HEK293 (cell line): ENCODE measurements at regions of chr15 and their contacts with region 1.

Region 1: DNA sequence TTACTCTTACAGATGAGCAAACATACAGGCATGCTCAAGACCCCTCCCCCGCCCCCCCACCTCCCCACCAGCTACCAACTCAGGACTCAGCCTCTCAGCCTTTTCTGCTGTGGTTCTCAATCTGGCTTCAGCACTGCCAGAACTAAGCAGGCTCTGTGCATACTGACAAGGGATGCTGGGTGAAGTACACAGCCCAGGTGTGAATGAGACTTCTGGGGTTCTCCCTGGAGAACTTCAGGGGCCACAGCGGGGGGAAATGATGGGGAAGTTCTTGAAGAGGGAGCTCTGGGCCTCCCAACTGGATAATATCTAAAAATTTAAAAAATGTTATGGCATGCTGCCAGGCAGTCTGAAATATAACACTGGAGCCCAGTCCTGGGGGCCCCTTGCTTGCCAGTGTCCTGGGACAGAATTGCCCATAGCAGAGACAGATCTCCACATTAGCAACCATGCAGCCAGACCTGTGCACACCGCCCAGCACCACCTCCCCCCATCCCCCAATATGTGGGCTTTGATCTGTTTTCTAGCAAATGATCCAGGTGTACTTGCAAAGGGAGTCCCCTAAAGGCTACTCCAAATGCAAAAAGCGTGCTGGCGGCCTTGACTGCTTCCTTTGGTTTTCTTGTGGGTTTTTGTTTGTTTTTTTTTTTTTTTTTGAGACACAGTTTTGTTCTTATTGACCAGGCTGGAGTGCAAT is 41.4 kb downstream of the PGPEP1L start:
- H3K4me3 ChIP-seq: no peak overlapping the region
- H3K27ac ChIP-seq: no peak overlapping the region
- H3K4me1 ChIP-seq: no peaks in the 10 kb centered on the region
- CTCF ChIP-seq: no peak

Region 2: DNA sequence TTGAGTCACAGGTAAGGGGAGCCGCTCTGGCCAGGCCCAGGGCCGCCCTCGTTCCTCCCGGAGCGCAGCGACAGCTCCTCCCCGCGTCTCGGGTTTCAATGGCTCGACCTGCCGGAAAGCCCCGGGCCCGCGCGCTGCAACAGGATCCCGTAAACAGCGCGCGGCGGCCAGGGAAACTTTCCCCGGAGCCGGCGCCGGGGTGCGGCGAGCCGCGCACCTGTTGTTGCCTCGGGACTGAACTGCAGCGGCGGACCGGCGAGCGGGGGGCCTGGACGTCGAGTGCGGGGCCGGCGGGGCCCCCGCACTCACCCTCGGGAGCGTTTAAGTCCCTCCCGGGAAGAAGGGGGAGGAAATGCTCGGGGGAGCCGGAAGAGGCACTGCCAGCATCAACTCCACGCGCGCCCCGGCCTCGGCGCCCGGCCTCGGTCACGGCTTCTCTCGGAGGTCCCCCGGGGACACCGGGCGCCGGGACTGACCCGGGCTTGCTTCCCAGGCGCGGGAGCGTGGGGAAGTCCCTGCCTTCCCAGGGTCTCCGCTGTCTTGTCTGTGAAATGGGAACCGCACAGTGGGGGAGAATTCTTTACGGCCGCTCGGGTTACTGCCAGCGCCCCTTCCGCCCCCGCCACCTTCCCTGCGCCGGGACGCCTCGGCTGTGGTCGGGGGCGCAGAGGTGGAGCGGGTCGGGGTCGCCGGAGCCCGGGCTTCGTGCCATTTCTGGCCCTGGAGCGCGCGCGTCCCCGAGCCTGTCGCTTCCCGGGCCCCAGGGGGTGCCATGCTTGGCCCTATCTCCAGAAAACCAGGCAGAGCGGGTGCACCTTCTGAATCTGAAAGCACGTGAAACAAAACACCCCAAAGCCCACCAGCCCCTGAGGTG is 48.8 kb after region 1 on chr15:
- CTCF ChIA-PET with region 1: interaction called, 3 read pairs
- POLR2A ChIA-PET with region 1: interaction called, 11 read pairs
- H3K4me3 ChIP-seq: peak overlapping the region; percentile 51
- H3K27ac ChIP-seq: peak overlapping the region; percentile 90
- H3K4me1 ChIP-seq: peaks cover 2% of the 10 kb centered on the region
- CTCF ChIP-seq: peak; percentile 33; the same call in 1 of the 2 replicates